ENCODE measurements at regions of chr17 and their contacts with region 1.

Region 1: GRCh38 chr17:49343273-49343672 is 18.8 kb downstream of the ZNF652 start:
- DNase-seq: peak in 4 of 14 experiments; percentile 21 to 58 (median 40)
- ATAC-seq: peak; percentile 39
- H3K4me3 ChIP-seq: peak overlapping the region; percentile 3
- H3K4me3 Mint-ChIP-seq: peak overlapping the region; percentile 78
- H3K27ac ChIP-seq: peak overlapping the region in 1 of 2 donors; percentile 41
- H3K27ac Mint-ChIP-seq: peak overlapping the region; percentile 67
- H3K4me1 ChIP-seq: peaks cover 73% of the 10 kb centered on the region
- H3K4me1 Mint-ChIP-seq: peaks cover 77% of the 10 kb centered on the region
- H3K27me3 ChIP-seq: no peaks in the 10 kb centered on the region
- H3K27me3 Mint-ChIP-seq: no peaks in the 10 kb centered on the region
- CTCF ChIP-seq: no peak

Region 2: DNA sequence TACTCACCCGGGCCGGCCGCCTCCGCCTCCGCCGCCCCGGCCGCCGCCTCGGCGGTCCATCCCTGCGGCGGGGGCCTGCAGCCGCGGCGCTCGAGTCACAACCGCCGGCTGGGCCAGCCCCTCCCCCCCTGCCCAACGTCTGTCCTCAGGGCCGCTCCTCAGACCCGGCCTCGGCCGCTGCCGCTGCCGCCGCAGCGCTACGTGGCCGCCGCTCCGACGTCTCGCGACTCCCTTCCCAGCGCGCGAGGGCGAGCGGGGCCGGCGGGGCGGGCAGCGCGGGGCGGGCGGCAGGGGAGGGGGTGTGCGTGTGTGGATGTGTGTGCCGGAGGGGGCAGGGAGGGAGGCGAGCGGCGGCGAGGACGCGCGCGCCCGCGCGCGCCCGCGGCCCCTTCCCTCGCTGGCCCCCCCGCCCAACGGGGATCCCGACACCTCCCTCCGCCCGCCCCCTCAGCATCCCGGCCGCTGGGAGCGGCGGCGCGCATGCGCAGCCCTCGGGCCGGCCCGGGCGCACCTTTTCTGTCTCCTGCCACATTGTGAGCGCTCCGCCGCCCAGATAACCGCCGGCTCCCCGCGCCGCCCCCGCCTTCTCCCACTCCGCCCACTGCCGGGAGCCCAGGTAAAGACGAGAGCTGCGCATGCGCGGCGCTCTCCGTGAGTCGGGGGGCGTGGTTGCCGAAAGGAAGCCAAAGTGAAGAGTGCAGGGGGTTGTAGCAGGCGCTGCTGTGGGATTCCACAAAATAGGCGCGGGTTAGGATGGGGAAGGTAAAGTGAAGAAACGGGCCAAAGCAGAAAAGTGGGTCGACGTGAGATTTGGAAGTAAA is 18.8 kb after region 1 on chr17 and contains the start of gene ZNF652:
- CTCF ChIA-PET with region 1: interaction called, 17 read pairs
- POLR2A ChIA-PET with region 1: interaction called, 65 read pairs
- intact Hi-C with region 1: loop called (anchors 2 kb)
- DNase-seq: peak; percentile 94 to 98 (median 97)
- ATAC-seq: peak; percentile 59
- H3K4me3 ChIP-seq: peak within 1 kb of the TSS; percentile 86
- H3K4me3 Mint-ChIP-seq: peak within 1 kb of the TSS; percentile 96
- H3K27ac ChIP-seq: peak within 1 kb of the TSS; percentile 61 to 87
- H3K27ac Mint-ChIP-seq: peak within 1 kb of the TSS; percentile 97
- H3K4me1 ChIP-seq: peaks cover 38% of the 10 kb centered on the region
- H3K4me1 Mint-ChIP-seq: peaks cover 56% of the 10 kb centered on the region
- H3K27me3 ChIP-seq: no peaks in the 10 kb centered on the region
- H3K27me3 Mint-ChIP-seq: no peaks in the 10 kb centered on the region
- CTCF ChIP-seq: no peak
- total RNA-seq, gene ZNF652: 33.7 to 34.9 TPM

Region 3: DNA sequence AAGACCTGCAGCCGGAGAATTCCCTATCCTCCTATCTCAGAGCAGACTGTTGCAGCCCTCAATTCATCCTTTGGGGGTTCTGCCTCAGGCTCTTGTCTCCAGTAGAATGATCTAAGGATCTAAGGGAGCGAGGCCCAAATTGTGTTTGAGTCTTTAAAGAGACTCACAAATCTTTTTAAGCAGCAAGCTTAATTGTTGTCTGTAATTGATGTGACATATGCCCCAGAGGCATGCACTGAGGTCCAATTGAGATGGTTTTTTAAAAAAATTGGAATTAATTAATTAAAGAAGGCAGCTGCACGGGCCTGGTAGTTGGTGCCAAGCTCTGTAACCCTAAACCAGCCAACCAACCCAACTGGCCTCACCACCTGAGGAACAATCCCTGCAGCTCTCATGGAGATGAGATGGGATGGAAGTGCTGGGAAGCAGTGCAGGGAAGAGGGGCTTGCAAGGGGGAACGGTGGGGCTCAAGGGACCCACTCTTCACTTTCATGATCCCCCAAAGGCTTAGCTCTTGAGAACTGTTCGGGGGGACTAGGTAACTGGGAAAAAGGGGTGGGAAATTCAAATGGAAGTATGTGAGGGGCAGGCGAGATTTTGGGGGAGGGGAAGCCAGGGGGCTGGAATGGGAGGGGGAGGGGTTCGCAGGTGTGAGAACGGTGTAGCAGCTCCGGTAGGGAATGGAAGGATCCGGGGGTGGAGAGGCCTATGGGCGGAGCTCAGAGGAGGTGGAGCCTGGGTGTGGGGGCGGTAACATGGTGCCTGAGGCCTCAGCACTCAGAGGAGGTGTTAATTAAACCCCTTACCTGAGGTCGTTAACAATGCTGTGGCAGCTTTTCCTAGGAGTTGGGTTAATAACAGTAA is 27.9 kb after region 1 on chr17:
- CTCF ChIA-PET with region 1: interaction called, 17 read pairs
- POLR2A ChIA-PET with region 1: interaction called, 5 read pairs
- intact Hi-C with region 1: no loop called
- DNase-seq: no peak
- ATAC-seq: no peak
- H3K4me3 ChIP-seq: no peak overlapping the region
- H3K4me3 Mint-ChIP-seq: no peak overlapping the region
- H3K27ac ChIP-seq: no peak overlapping the region
- H3K27ac Mint-ChIP-seq: no peak overlapping the region
- H3K4me1 ChIP-seq: peaks cover 6% of the 10 kb centered on the region
- H3K4me1 Mint-ChIP-seq: peaks cover 4% of the 10 kb centered on the region
- H3K27me3 ChIP-seq: no peaks in the 10 kb centered on the region
- H3K27me3 Mint-ChIP-seq: no peaks in the 10 kb centered on the region
- CTCF ChIP-seq: no peak

Measured in CD4-positive, alpha-beta T cell (primary cell).